Endothelial cell of umbilical vein (primary cell): ENCODE measurements at regions of chr5 and their contacts with region 1.

Region 1: DNA sequence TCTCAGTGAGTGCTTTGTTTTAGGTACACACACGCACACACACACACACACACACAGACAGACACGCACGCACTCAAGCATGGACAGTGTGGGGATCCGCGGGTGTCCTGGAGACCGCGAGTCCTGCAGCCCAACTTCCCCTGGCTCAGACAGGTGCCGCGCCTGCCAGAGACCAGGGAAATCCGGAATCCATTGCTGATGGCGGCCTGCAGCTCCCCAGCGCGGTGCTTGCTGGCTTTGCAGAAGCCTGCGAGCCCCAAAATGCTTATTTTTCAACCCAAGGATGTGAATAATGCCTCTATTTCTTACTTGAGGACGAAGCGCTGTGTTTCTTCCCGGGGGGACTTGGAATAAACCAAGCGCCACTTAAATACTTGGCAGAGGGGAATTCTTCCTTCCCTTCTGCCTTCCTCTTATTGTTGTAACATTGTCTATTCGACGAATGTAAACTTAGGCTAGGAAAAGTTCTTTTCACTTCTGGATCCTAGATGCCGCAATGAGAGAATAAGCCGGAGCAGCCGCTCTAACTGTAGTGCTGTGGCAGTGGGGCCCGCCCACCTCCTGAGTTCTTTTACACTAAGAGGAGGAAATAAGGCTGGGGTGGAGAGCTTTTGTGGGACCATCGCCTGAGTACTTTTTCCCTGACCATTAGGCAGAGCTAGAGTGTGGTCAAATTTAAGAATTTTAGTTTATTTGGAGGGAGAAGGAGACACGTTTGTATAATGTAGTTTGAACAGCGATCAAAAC is 802 bp downstream of the ITGA2 start:
- DNase-seq: peak; percentile 78
- H3K4me3 ChIP-seq: peak overlapping the region; percentile 56 to 80 (median 61)
- H3K27ac ChIP-seq: peak overlapping the region; percentile 31
- H3K4me1 ChIP-seq: peaks cover 61% of the 10 kb centered on the region
- H3K27me3 ChIP-seq: no peaks in the 10 kb centered on the region
- CTCF ChIP-seq: peak; percentile 29 to 45
- POLR2A ChIP-seq: no peak

Region 2: DNA sequence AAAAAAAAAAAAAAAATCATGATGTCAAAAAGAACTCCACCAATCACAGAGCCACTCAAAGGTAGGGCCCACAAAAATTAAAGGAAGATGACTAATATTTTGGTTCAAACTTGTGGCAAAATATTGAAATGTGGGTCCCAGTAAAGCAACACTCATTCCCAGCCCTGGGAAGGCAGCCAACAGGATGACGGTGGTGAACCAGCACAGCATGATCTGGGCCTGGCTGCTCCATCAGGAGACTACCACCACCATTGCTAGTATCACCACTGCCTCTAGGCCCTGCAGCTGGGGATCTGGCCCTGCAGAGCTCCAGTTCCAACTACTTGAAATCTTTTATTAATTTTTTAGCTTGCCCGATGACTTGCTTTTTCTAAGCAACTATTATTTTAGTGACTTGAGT is 409.0 kb before region 1 on chr5:
- CTCF ChIA-PET with region 1: no interaction called
- POLR2A ChIA-PET with region 1: no interaction called
- dilution Hi-C with region 1: no loop called
- intact Hi-C with region 1: no loop called
- DNase-seq: peak; percentile 6
- H3K4me3 ChIP-seq: no peak overlapping the region
- H3K27ac ChIP-seq: no peak overlapping the region
- H3K4me1 ChIP-seq: no peaks in the 10 kb centered on the region
- H3K27me3 ChIP-seq: no peaks in the 10 kb centered on the region
- CTCF ChIP-seq: no peak
- POLR2A ChIP-seq: no peak

Region 3: GRCh38 chr5:52693280-52693679 is 296.7 kb before region 1 on chr5:
- CTCF ChIA-PET with region 1: no interaction called
- POLR2A ChIA-PET with region 1: no interaction called
- dilution Hi-C with region 1: no loop called
- intact Hi-C with region 1: no loop called
- DNase-seq: peak; percentile 56
- H3K4me3 ChIP-seq: no peak overlapping the region
- H3K27ac ChIP-seq: no peak overlapping the region
- H3K4me1 ChIP-seq: no peaks in the 10 kb centered on the region
- H3K27me3 ChIP-seq: peaks cover 2% of the 10 kb centered on the region in 2 experiments
- CTCF ChIP-seq: peak; percentile 52 to 64
- POLR2A ChIP-seq: no peak

Region 4: DNA sequence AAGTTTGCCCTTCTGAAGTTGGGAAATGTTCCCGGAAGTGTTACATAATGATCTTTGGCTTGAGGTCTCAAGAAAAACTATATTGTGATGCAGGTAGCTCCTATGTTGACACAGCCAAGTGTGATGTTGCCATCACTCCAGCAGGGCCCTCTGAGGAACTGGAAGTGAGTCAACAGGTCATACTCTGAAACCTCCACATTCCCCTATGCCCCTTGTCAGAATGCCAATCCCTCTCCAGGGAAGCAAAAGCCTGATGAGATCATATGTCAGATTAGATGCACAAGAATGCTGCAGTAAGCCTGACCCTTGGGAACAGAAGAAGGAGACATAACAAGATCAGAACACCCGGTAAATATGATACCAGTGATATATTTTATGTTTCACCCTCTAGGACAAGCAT is 67.6 kb before region 1 on chr5:
- CTCF ChIA-PET with region 1: no interaction called
- POLR2A ChIA-PET with region 1: no interaction called
- dilution Hi-C with region 1: no loop called
- intact Hi-C with region 1: loop called (anchors 2 kb)
- DNase-seq: peak; percentile 83
- H3K4me3 ChIP-seq: no peak overlapping the region
- H3K27ac ChIP-seq: peak overlapping the region; percentile 57
- H3K4me1 ChIP-seq: peaks cover 10% of the 10 kb centered on the region
- H3K27me3 ChIP-seq: no peaks in the 10 kb centered on the region
- CTCF ChIP-seq: peak in 1 of 2 donors; percentile 14
- POLR2A ChIP-seq: no peak

Region 5: GRCh38 chr5:53008751-53009150 is 18.8 kb after region 1 on chr5:
- CTCF ChIA-PET with region 1: interaction called, 3 read pairs
- POLR2A ChIA-PET with region 1: no interaction called
- dilution Hi-C with region 1: no loop called
- intact Hi-C with region 1: loop called (anchors 1 kb)
- DNase-seq: peak; percentile 43
- H3K4me3 ChIP-seq: no peak overlapping the region
- H3K27ac ChIP-seq: peak overlapping the region; percentile 38
- H3K4me1 ChIP-seq: peaks cover 53% of the 10 kb centered on the region
- H3K27me3 ChIP-seq: no peaks in the 10 kb centered on the region
- CTCF ChIP-seq: no peak
- POLR2A ChIP-seq: peak; percentile 13

Region 6: DNA sequence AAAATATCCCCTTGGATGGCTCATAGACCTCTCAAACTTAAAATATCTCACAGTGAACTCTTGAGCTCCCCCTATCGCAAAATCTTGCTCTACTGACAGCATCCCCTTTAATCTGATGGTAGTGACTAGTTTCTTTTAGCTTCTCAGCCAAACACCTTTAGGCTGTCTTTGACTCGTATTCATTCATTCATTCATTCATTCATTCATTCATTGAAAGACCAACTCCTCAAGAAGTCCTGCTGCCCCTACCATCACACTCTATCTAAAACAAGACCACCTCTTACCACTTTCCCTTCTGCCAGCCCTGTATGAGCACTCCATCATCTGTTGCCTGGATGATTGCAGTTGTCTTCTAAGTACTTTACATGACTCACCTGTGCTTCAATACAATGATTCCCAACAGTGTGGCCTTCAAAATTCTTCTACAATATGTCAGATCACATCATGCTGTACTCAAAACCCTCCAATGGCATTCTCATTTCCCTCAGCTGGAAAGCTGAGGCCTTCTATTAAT is 46.0 kb after region 1 on chr5:
- CTCF ChIA-PET with region 1: interaction called, 32 read pairs
- POLR2A ChIA-PET with region 1: interaction called, 3 read pairs
- dilution Hi-C with region 1: no loop called
- intact Hi-C with region 1: no loop called
- DNase-seq: peak; percentile 28
- H3K4me3 ChIP-seq: no peak overlapping the region
- H3K27ac ChIP-seq: no peak overlapping the region
- H3K4me1 ChIP-seq: peaks cover 52% of the 10 kb centered on the region
- H3K27me3 ChIP-seq: no peaks in the 10 kb centered on the region
- CTCF ChIP-seq: peak; percentile 20 to 31
- POLR2A ChIP-seq: no peak

Region 7: DNA sequence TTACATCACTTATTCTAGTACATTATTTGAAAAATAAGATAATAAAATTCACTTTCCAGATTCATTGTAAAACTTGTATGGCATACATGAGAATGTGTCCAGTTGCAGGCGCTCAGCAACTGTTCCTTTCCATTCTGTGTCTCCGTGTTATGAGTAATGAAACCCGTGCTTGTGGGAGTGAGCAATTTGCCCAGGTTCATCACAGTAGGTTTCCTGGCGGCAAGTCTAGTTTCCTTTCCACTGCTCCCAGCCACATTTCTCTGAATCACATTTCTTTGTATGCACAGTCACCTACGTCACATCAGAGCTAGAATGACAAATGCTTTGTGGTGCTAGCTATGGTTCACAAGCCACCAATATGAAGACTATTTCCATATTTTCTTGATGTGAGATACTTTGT is 79.7 kb after region 1 on chr5:
- CTCF ChIA-PET with region 1: interaction called, 16 read pairs
- POLR2A ChIA-PET with region 1: no interaction called
- dilution Hi-C with region 1: no loop called
- intact Hi-C with region 1: loop called (anchors 1 kb)
- DNase-seq: peak; percentile 94
- H3K4me3 ChIP-seq: no peak overlapping the region
- H3K27ac ChIP-seq: peak overlapping the region; percentile 89
- H3K4me1 ChIP-seq: peaks cover 14% of the 10 kb centered on the region
- H3K27me3 ChIP-seq: no peaks in the 10 kb centered on the region
- CTCF ChIP-seq: no peak
- POLR2A ChIP-seq: no peak